ENCODE measurements at regions of chr20 and their contacts with region 1.

Region 1: GRCh38 chr20:33777816-33778215 is 33.3 kb upstream of the CHMP4B start:
- DNase-seq: no peak
- H3K4me3 ChIP-seq: no peak overlapping the region
- H3K27ac ChIP-seq: no peak overlapping the region
- H3K4me1 ChIP-seq: no peaks in the 10 kb centered on the region
- H3K27me3 ChIP-seq: no peaks in the 10 kb centered on the region
- CTCF ChIP-seq: no peak

Region 2: GRCh38 chr20:33791959-33792597 is 14.3 kb after region 1 on chr20:
- CTCF ChIA-PET with region 1: interaction called, 6 read pairs
- POLR2A ChIA-PET with region 1: no interaction called
- intact Hi-C with region 1: loop called (anchors 1 kb)
- DNase-seq: peak; percentile 69
- H3K4me3 ChIP-seq: no peak overlapping the region
- H3K27ac ChIP-seq: no peak overlapping the region
- H3K4me1 ChIP-seq: no peaks in the 10 kb centered on the region
- H3K27me3 ChIP-seq: no peaks in the 10 kb centered on the region
- CTCF ChIP-seq: peak; percentile 84

Measured in A673 (cell line).